Posterior vena cava (tissue), 2 donors: ENCODE measurements at regions of chr4 and their contacts with region 1.

Region 1: GRCh38 chr4:7719354-7720174 is 220.1 kb downstream of the AFAP1 start:
- DNase-seq: peak; percentile 89

Region 2: GRCh38 chr4:5839751-5840674 is 1879.6 kb before region 1 on chr4:
- intact Hi-C with region 1: no loop called
- DNase-seq: peak; percentile 91

Region 3: DNA sequence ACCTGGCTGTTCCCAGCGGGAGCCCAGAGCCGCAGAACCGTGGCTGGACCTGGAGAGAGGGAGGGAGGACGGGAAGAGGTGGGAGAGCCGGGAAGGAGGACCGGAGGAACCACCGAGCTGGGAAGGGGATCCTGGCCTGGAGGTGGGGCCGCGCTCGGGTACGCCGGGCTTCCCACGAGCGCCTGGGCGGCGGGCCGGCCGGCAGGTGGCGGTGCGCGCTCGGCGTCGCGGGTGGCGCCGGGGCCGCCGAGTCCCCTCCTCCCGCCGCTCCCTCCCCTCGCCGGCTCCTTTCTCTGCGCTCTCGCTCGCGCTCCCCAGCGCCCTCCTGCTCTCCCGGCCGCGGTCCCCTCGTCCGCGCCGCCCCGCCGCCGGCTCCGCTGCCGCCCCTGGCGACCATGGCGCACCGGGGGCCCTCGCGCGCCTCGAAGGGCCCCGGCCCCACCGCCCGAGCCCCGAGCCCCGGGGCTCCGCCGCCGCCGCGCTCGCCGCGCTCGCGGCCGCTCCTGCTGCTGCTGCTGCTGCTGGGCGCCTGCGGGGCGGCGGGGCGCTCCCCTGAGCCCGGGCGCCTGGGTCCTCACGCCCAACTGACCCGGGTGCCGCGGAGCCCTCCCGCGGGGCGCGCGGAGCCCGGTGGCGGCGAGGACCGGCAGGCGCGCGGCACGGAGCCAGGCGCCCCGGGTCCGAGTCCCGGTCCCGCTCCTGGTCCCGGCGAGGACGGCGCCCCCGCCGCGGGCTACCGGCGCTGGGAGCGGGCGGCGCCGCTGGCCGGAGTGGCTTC is 527.1 kb before region 1 on chr4 and contains the start of gene SORCS2:
- intact Hi-C with region 1: loop called (anchors 1 to 5 kb)
- DNase-seq: peak; percentile 89
- total RNA-seq, gene SORCS2: 5.0 to 11.9 TPM

Region 4: DNA sequence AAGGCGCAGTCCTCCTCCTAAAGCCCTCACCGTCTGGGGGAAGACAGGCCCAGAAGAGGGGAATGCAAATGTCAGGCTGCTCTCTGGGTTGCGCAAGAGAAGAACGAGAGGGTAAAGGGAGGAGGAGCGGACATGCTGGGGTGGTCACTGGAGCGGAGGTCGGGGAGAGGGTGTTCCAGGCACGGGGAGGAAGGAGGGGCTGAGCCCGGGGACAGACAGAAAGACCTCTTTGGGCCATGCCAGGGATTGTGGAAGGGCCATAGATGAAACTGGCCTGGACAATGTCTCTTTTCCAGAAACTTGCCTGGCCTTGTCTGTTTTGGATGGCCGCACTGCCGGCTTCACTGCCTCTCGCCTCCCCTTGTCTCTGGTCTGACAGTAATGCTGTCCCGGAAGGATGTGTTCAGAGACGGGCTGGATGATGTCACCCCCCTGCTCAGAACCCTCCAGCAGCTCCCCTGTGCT is 406.2 kb before region 1 on chr4:
- intact Hi-C with region 1: loop called in 1 of 2 experiments (anchors 10 kb)
- DNase-seq: no peak

Region 5: GRCh38 chr4:7462509-7462971 is 257.0 kb before region 1 on chr4:
- intact Hi-C with region 1: loop called (anchors 5 to 10 kb)
- DNase-seq: no peak

Region 6: DNA sequence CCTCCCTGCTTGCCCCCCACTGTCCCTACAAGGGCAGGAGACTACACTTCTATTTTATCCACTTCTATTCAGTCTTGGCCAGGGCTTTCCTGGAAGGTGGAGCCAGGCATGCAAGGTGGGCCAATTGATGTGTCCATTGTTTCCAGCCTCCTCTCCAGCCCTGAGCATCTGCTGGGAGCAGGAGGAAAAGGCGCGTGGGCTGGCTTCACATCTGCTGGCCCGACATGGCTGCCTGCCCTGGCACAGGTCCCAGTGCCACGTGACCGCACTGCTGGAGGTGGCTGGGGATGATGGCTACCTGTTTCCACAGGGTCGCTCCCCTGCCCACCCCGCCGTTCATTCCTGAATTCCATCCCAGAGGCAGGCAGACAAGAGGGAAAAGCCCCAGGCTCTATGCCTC is 27.6 kb before region 1 on chr4:
- intact Hi-C with region 1: no loop called
- DNase-seq: no peak